PC-3 (cell line): ENCODE measurements at regions of chr7 and their contacts with region 1.

Region 1: DNA sequence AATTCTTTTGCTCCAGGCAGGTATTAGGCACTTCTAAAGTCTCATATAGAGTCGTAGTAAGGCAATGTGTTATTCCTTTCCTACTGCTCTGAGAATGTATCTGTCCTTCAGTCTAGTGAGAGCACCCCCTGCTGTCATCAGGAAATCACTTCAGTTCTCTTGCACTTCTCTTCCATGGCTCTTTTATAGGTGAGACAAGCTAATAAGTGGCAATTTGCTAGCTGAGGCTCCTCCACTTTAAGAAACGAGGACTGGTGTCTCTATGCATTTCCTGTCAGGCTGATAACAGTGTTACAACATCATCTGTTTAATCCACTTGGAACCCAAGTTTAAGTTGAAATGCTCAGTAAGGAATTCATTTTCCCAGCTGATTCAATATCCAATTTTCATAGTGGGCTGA is 350.6 kb downstream of the TFEC start:
- DNase-seq: peak; percentile 61
- ATAC-seq: peak; percentile 50; the same call in 1 of the 2 replicates
- H3K4me3 ChIP-seq: no peak overlapping the region
- H3K27ac ChIP-seq: no peak overlapping the region
- H3K4me1 ChIP-seq: peaks cover 24% of the 10 kb centered on the region
- H3K27me3 ChIP-seq: no peaks in the 10 kb centered on the region
- CTCF ChIP-seq: peak; percentile 70

Region 2: GRCh38 chr7:115135769-115136410 is 544.1 kb before region 1 on chr7:
- CTCF ChIA-PET with region 1: no interaction called
- POLR2A ChIA-PET with region 1: no interaction called
- intact Hi-C with region 1: loop called (anchors 5 kb)
- DNase-seq: peak; percentile 80
- ATAC-seq: peak; percentile 83
- H3K4me3 ChIP-seq: peak overlapping the region; percentile 30
- H3K27ac ChIP-seq: peak overlapping the region; percentile 85
- H3K4me1 ChIP-seq: peaks cover 29% of the 10 kb centered on the region
- H3K27me3 ChIP-seq: no peaks in the 10 kb centered on the region
- CTCF ChIP-seq: no peak

Region 3: DNA sequence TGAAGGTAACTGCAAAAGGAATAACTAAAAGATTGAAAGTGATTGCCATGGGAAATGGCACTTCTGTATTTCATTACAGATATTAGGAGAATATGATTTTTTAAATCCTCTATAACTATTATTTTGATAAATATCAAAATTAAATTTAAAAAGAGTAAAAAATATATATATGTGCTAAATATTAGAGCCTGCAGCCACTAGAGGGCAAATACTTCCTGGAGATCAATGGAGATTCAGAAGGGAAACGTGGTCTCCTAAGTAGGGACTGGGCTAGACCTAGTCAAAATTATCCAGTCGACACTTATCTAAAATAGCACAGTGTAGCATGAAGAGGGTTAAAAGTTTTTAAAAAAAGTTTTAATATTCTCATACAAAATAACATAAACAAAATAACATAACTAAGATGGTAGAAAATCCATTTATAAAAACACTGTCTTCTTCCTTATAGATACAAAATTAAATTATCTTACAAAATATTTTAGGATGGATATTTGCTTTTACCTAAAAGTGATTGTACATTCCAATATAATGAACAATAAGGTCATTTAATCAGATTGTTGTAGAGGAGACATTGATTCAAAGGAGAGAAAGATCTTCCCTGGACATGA is 323.7 kb before region 1 on chr7:
- CTCF ChIA-PET with region 1: no interaction called
- POLR2A ChIA-PET with region 1: no interaction called
- intact Hi-C with region 1: loop called (anchors 2 kb)
- DNase-seq: peak; percentile 48
- ATAC-seq: 0 out of 2 replicates have a peak, but pooled peaks have one; percentile 28
- H3K4me3 ChIP-seq: no peak overlapping the region
- H3K27ac ChIP-seq: no peak overlapping the region
- H3K4me1 ChIP-seq: peaks cover 15% of the 10 kb centered on the region
- H3K27me3 ChIP-seq: no peaks in the 10 kb centered on the region
- CTCF ChIP-seq: peak; percentile 46

Region 4: GRCh38 chr7:115511330-115511729 is 168.6 kb before region 1 on chr7:
- CTCF ChIA-PET with region 1: no interaction called
- POLR2A ChIA-PET with region 1: no interaction called
- intact Hi-C with region 1: loop called (anchors 5 kb)
- DNase-seq: peak; percentile 45
- ATAC-seq: no peak
- H3K4me3 ChIP-seq: no peak overlapping the region
- H3K27ac ChIP-seq: no peak overlapping the region
- H3K4me1 ChIP-seq: no peaks in the 10 kb centered on the region; the same call in 1 of the 2 replicates
- H3K27me3 ChIP-seq: no peaks in the 10 kb centered on the region
- CTCF ChIP-seq: peak; percentile 53